ENCODE measurements at regions of chr17 and their contacts with region 1.

Region 1: DNA sequence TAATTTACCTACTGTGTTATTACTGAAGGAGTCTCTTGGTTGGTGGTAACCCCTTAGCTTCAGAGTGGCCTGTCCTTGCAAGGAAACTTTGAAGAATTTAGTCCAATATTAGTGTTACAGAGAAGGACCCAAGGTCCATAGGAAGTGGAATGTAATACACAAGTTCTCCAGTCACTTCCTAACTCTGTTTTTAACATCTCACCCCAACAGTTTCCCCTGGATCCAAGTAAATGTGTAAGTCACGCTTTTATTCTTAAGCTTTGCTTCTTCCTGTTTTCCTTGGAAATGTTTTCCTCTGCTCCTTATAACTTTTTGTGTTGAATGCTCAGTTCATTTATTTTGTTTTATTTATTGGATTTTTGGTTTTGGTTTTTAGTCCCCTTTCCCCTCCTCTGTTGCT is 25.9 kb upstream of the RPRML start:
- DNase-seq: no peak
- ATAC-seq: no peak
- H3K4me3 ChIP-seq: no peak overlapping the region
- H3K4me3 Mint-ChIP-seq: no peak overlapping the region
- H3K27ac ChIP-seq: no peak overlapping the region
- H3K27ac Mint-ChIP-seq: no peak overlapping the region
- H3K4me1 ChIP-seq: peaks cover 7% of the 10 kb centered on the region
- H3K4me1 Mint-ChIP-seq: peaks cover 3% of the 10 kb centered on the region
- H3K27me3 ChIP-seq: no peaks in the 10 kb centered on the region
- H3K27me3 Mint-ChIP-seq: no peaks in the 10 kb centered on the region
- CTCF ChIP-seq: no peak

Region 2: DNA sequence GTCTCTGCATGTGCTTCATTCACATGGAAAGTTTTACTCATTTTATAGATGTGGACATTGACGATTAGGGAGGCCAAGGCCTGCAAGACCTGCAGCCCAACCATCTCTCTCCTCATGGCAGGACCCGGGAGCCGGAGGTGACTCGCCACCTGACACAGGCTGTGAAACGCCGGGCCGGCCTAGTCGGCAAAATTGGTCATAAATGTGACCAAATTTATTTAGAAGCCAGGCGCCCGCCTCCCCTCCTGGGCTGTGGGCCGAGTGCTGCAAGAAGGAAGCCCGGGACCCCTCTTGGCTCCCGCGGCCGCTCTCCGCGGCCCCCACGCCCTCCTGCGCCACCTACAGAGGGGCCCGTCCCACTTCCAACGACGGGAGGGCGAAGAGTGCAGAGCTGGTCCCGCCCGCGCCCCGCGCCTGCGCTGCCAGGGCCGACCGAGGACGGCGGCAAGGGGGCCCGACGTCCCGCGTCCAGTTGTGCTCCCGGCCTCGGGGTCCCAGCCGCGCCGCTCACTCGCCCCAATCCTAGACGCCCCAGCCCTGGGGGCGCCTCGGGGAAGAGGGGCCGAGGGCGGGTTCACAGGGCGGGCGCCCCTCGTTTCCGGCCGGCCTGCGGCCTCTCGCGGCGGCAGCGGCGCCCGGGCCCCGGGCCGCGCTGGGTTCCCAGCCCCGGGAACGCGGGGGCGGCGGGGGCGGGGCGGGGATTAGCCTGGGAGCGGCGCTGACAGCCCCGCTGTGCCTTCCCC is 233.9 kb before region 1 on chr17:
- CTCF ChIA-PET with region 1: no interaction called
- POLR2A ChIA-PET with region 1: no interaction called
- intact Hi-C with region 1: no loop called
- DNase-seq: peak in 4 of 9 experiments; percentile 27 to 63 (median 42)
- ATAC-seq: peak; percentile 47
- H3K4me3 ChIP-seq: peak overlapping the region; percentile 30 to 36
- H3K4me3 Mint-ChIP-seq: peak overlapping the region; percentile 61
- H3K27ac ChIP-seq: no peak overlapping the region
- H3K27ac Mint-ChIP-seq: no peak overlapping the region
- H3K4me1 ChIP-seq: peaks cover 31% of the 10 kb centered on the region
- H3K4me1 Mint-ChIP-seq: peaks cover 23% of the 10 kb centered on the region
- H3K27me3 ChIP-seq: peaks cover 6 to 20% of the 10 kb centered on the region in 2 experiments
- H3K27me3 Mint-ChIP-seq: peaks cover 37% of the 10 kb centered on the region
- CTCF ChIP-seq: no peak

Region 3: GRCh38 chr17:46841561-46842379 is 163.1 kb before region 1 on chr17:
- CTCF ChIA-PET with region 1: interaction called, 9 read pairs
- POLR2A ChIA-PET with region 1: no interaction called
- intact Hi-C with region 1: loop called in 1 of 2 experiments (anchors 5 kb)
- DNase-seq: peak in 3 of 9 experiments; percentile 34 to 48 (median 35)
- ATAC-seq: peak; percentile 31
- H3K4me3 ChIP-seq: no peak overlapping the region
- H3K4me3 Mint-ChIP-seq: no peak overlapping the region
- H3K27ac ChIP-seq: no peak overlapping the region
- H3K27ac Mint-ChIP-seq: no peak overlapping the region
- H3K4me1 ChIP-seq: no peaks in the 10 kb centered on the region
- H3K4me1 Mint-ChIP-seq: peaks cover 7% of the 10 kb centered on the region
- H3K27me3 ChIP-seq: peaks cover 8 to 14% of the 10 kb centered on the region in 2 experiments
- H3K27me3 Mint-ChIP-seq: peaks cover 52% of the 10 kb centered on the region
- CTCF ChIP-seq: peak; percentile 55

Region 4: GRCh38 chr17:46977348-46977747 is 27.6 kb before region 1 on chr17:
- CTCF ChIA-PET with region 1: no interaction called
- POLR2A ChIA-PET with region 1: no interaction called
- intact Hi-C with region 1: no loop called
- DNase-seq: no peak
- ATAC-seq: no peak
- H3K4me3 ChIP-seq: no peak overlapping the region
- H3K4me3 Mint-ChIP-seq: peak overlapping the region; percentile 80
- H3K27ac ChIP-seq: no peak overlapping the region
- H3K27ac Mint-ChIP-seq: no peak overlapping the region
- H3K4me1 ChIP-seq: peaks cover 12% of the 10 kb centered on the region
- H3K4me1 Mint-ChIP-seq: peaks cover 16% of the 10 kb centered on the region
- H3K27me3 ChIP-seq: peaks cover 10 to 13% of the 10 kb centered on the region in 2 experiments
- H3K27me3 Mint-ChIP-seq: peaks cover 41% of the 10 kb centered on the region
- CTCF ChIP-seq: no peak

Region 5: GRCh38 chr17:47145351-47145750 is 140.4 kb after region 1 on chr17:
- CTCF ChIA-PET with region 1: no interaction called
- POLR2A ChIA-PET with region 1: no interaction called
- intact Hi-C with region 1: no loop called
- DNase-seq: no peak
- ATAC-seq: no peak
- H3K4me3 ChIP-seq: no peak overlapping the region
- H3K4me3 Mint-ChIP-seq: no peak overlapping the region
- H3K27ac ChIP-seq: no peak overlapping the region
- H3K27ac Mint-ChIP-seq: no peak overlapping the region
- H3K4me1 ChIP-seq: no peaks in the 10 kb centered on the region
- H3K4me1 Mint-ChIP-seq: no peaks in the 10 kb centered on the region
- H3K27me3 ChIP-seq: no peaks in the 10 kb centered on the region
- H3K27me3 Mint-ChIP-seq: no peaks in the 10 kb centered on the region
- CTCF ChIP-seq: no peak